Heart left ventricle (tissue), 16 donors: ENCODE measurements at regions of chr5 and their contacts with region 1.

Region 1: DNA sequence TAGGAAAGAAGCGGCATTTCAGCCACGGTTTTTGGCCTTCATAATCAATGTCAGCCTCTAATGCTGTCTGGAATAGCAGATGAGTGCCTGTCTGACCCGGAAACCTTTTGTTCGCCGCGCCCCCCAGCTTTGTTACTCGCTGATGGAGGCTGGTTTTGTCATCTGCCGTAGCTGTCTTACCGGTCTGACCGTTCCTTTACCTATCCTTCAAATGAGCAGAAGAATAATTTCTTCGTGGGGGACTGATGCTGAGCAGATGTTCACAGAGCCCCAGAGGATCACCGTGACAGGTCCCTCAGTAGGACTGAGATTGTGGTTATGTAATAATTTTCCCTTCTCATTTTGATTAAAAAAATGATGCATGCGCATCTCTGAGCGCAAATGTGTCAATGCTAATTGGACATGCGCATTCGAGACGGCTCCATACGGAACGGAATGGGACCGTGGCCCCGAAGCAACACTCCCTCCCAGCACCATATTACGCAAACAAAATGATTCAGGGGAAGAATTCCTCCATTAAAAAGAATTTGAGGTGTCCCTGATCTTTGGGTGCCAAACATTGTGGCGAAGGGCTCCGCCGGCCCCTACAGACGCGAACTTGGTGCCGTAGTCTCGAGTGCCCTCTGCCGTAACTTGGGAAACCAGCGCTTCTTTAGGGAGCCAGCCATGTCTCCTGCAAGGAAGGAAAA is 27.6 kb downstream of the TLX3 start:
- DNase-seq: peak in 1 of 5 donors; percentile 26
- ATAC-seq: peak in 3 of 4 donors; percentile 72 to 75 (median 73)
- H3K4me3 ChIP-seq: peak overlapping the region in 11 of 12 donors; percentile 5 to 56 (median 35)
- H3K27ac ChIP-seq: no peak overlapping the region
- H3K4me1 ChIP-seq: peaks cover 0 to 11% (median 0%) of the 10 kb centered on the region in 12 donors
- H3K27me3 ChIP-seq: peaks cover 0 to 78% (median 22%) of the 10 kb centered on the region in 9 donors
- CTCF ChIP-seq: peak; percentile 26 to 72 (median 58)
- POLR2A ChIP-seq: no peak

Region 2: DNA sequence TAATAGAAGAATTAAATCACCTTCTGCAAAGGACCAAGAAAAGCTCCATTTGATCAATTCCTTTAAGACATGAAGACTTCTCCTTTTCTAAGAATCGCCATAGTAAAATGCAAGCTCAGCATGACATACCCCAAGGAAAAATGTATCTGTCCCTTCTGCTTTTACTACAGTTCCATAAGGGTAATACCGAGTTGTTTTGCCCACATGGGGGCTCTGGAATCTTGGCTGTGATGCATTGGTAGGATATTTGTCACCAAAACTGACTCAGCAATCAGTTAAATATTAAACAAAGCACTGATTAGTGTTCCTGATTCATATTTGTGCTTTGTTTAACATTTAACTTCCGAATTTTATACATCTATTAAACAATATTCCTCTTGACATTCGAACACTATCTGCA is 857.2 kb before region 1 on chr5:
- intact Hi-C with region 1: no loop called
- DNase-seq: no peak
- ATAC-seq: no peak
- H3K4me3 ChIP-seq: no peak overlapping the region
- H3K27ac ChIP-seq: no peak overlapping the region
- H3K4me1 ChIP-seq: peaks cover 0 to 21% (median 0%) of the 10 kb centered on the region in 12 donors
- H3K27me3 ChIP-seq: peaks cover 0 to 4% (median 0%) of the 10 kb centered on the region in 9 donors
- CTCF ChIP-seq: no peak
- POLR2A ChIP-seq: no peak

Region 3: GRCh38 chr5:170638454-170639220 is 698.0 kb before region 1 on chr5:
- intact Hi-C with region 1: loop called in 6 of 10 experiments (anchors 5 to 10 kb)
- DNase-seq: peak; percentile 52 to 81 (median 62)
- ATAC-seq: peak; percentile 18 to 82 (median 67)
- H3K4me3 ChIP-seq: no peak overlapping the region
- H3K27ac ChIP-seq: no peak overlapping the region
- H3K4me1 ChIP-seq: peaks cover 0 to 16% (median 11%) of the 10 kb centered on the region in 12 donors
- H3K27me3 ChIP-seq: peaks cover 0 to 3% (median 0%) of the 10 kb centered on the region in 9 donors
- CTCF ChIP-seq: peak; percentile 78 to 94 (median 88)
- POLR2A ChIP-seq: no peak

Region 4: GRCh38 chr5:170740551-170741205 is 596.0 kb before region 1 on chr5:
- intact Hi-C with region 1: loop called in 9 of 10 experiments (anchors 2 to 10 kb)
- DNase-seq: no peak
- ATAC-seq: no peak
- H3K4me3 ChIP-seq: no peak overlapping the region
- H3K27ac ChIP-seq: no peak overlapping the region
- H3K4me1 ChIP-seq: peaks cover 0 to 19% (median 14%) of the 10 kb centered on the region in 12 donors
- H3K27me3 ChIP-seq: peaks cover 0 to 15% (median 0%) of the 10 kb centered on the region in 9 donors
- CTCF ChIP-seq: no peak
- POLR2A ChIP-seq: no peak

Region 5: GRCh38 chr5:170809551-170809950 is 527.1 kb before region 1 on chr5:
- intact Hi-C with region 1: loop called in 3 of 10 experiments (anchors 10 kb)
- DNase-seq: no peak
- ATAC-seq: peak in 3 of 4 donors; percentile 50 to 57 (median 55)
- H3K4me3 ChIP-seq: no peak overlapping the region
- H3K27ac ChIP-seq: no peak overlapping the region
- H3K4me1 ChIP-seq: no peaks in the 10 kb centered on the region
- H3K27me3 ChIP-seq: peaks cover 0 to 12% (median 0%) of the 10 kb centered on the region in 9 donors
- CTCF ChIP-seq: peak in 7 of 12 donors; percentile 13 to 46 (median 25)
- POLR2A ChIP-seq: no peak

Region 6: DNA sequence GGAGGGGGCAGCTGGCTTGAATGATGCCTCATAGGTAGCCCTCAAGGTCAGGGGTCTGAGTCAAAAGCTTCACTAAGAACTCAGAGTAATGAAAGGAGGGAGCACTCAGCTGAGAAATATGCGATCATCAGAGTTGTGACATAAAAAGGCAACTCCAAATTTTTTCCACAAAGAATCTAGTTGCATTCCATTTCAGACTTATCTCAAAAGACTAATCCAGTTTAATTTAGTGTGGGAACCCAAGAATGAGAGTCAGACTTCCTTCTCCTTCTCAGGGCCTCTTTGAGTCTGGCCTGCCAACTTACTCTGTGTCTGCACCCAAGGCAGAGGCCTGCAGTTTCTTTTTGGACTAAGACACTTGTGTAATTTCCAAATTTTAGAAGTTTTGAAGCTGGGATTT is 518.4 kb before region 1 on chr5:
- intact Hi-C with region 1: loop called in 2 of 10 experiments (anchors 10 kb)
- DNase-seq: no peak
- ATAC-seq: no peak
- H3K4me3 ChIP-seq: no peak overlapping the region
- H3K27ac ChIP-seq: no peak overlapping the region
- H3K4me1 ChIP-seq: no peaks in the 10 kb centered on the region
- H3K27me3 ChIP-seq: peaks cover 0 to 4% (median 0%) of the 10 kb centered on the region in 9 donors
- CTCF ChIP-seq: no peak
- POLR2A ChIP-seq: no peak

Region 7: DNA sequence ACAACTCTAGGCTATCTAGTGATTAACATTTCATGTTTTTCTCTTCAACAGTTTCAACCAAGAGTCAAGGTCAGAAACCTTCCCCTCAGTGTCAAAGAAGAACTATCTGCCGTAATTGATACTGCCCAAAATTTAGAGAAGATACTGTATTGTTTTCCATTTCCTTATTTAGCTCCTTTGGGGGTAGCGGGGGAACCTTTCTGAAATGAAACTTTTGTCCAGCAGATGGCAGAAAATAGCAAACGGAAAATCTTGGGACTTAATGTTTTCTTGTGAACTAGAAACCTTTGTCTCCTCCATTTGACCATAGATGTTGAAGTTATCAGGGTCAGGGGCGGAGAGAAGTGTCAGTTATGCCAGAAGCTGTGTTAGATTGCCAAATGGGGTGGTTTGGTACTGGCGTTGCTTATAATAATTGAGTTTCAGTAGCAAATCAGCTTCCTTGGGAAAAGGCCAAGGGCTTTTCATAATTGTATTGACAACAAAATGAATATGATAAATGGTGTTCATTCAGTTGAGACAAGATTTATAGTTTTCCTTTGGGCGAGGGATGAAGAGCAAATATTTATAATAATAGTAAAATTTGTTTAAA is 129.3 kb before region 1 on chr5:
- intact Hi-C with region 1: loop called (anchors 1 to 5 kb)
- DNase-seq: peak in 1 of 5 donors; percentile 7
- ATAC-seq: no peak
- H3K4me3 ChIP-seq: no peak overlapping the region
- H3K27ac ChIP-seq: no peak overlapping the region
- H3K4me1 ChIP-seq: peaks cover 0 to 4% (median 0%) of the 10 kb centered on the region in 12 donors
- H3K27me3 ChIP-seq: no peaks in the 10 kb centered on the region
- CTCF ChIP-seq: peak; percentile 24 to 69 (median 50)
- POLR2A ChIP-seq: no peak

Region 8: GRCh38 chr5:171379961-171380360 is 43.3 kb after region 1 on chr5:
- intact Hi-C with region 1: no loop called
- DNase-seq: no peak
- ATAC-seq: no peak
- H3K4me3 ChIP-seq: no peak overlapping the region
- H3K27ac ChIP-seq: no peak overlapping the region
- H3K4me1 ChIP-seq: no peaks in the 10 kb centered on the region
- H3K27me3 ChIP-seq: no peaks in the 10 kb centered on the region
- CTCF ChIP-seq: no peak
- POLR2A ChIP-seq: no peak

Region 9: GRCh38 chr5:171397190-171397589 is 60.5 kb after region 1 on chr5:
- intact Hi-C with region 1: no loop called
- DNase-seq: no peak
- ATAC-seq: peak in 1 of 4 donors; percentile 15
- H3K4me3 ChIP-seq: no peak overlapping the region
- H3K27ac ChIP-seq: no peak overlapping the region
- H3K4me1 ChIP-seq: peaks cover 0 to 34% (median 15%) of the 10 kb centered on the region in 12 donors
- H3K27me3 ChIP-seq: no peaks in the 10 kb centered on the region
- CTCF ChIP-seq: no peak
- POLR2A ChIP-seq: no peak

Region 10: DNA sequence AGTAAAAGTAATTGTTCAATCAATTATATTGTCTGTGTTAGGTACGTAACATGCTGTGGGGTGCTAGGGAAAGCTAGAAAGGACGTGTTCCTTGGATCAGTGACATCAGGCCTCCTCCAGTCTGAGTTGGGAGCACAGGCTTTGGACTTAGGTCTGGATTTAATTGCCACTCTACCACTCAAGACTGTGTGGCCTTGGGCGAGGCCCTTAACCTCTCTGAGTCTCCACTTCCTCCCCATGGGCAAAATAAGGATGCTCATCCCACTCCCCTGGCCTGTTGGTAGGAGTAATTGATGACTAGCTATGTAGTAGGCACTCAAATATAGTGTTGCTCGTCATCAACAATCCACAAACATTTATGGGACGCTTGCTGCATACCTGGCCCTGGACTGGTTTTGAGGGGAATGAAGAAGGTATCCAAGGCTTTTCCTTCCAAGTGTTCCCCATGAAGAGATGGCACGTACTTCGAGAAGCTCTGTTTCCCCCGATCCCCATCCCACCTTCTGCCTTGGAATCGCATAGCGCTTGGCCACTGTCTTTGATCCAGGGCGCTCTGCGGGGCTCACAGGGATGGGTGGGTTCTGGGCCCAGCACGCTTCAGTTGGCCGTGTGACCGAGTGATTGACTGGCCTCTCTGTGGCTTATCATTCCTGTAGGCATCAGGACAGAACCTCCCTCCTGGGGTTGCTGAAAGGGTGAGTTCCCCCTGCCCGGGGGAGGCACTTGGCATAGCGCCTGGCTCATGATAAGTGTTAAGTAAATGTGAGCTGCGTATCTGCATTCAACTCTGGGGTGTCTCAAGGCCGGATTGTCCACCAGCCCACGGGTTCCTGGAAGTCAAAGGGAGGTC is 90.9 kb after region 1 on chr5:
- intact Hi-C with region 1: no loop called
- DNase-seq: peak; percentile 75 to 91 (median 83)
- ATAC-seq: peak; percentile 72 to 83 (median 78)
- H3K4me3 ChIP-seq: no peak overlapping the region
- H3K27ac ChIP-seq: peak overlapping the region in 6 of 12 donors; percentile 20 to 71 (median 44)
- H3K4me1 ChIP-seq: peaks cover 0 to 53% (median 10%) of the 10 kb centered on the region in 12 donors
- H3K27me3 ChIP-seq: no peaks in the 10 kb centered on the region
- CTCF ChIP-seq: no peak
- POLR2A ChIP-seq: no peak